Common myeloid progenitor, CD34-positive (primary cell): ENCODE measurements at regions of chr20 and their contacts with region 1.

Region 1: DNA sequence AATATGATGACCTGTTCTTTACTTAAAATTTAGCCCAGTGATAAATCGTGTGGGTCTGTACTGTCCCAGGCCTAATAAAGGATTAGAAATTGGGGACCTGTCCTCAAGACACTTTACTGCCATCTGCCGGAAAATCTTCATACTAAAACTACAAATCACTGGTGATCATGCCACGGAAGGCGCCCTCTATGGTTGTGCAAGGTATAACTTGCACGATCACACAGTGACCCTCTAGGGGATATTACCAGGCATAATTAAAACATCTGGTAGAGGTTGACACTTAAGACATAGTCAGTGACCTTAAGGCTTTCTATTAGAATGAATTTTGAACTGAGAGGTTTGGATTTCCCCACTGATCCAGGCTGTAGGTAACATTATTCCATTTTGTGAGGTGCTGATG is 172.6 kb downstream of the BMP2 start:
- DNase-seq: peak; percentile 67 to 80 (median 69)
- H3K4me3 ChIP-seq: no peak overlapping the region
- H3K27ac ChIP-seq: no peak overlapping the region
- H3K4me1 ChIP-seq: no peaks in the 10 kb centered on the region
- H3K27me3 ChIP-seq: no peaks in the 10 kb centered on the region

Region 2: DNA sequence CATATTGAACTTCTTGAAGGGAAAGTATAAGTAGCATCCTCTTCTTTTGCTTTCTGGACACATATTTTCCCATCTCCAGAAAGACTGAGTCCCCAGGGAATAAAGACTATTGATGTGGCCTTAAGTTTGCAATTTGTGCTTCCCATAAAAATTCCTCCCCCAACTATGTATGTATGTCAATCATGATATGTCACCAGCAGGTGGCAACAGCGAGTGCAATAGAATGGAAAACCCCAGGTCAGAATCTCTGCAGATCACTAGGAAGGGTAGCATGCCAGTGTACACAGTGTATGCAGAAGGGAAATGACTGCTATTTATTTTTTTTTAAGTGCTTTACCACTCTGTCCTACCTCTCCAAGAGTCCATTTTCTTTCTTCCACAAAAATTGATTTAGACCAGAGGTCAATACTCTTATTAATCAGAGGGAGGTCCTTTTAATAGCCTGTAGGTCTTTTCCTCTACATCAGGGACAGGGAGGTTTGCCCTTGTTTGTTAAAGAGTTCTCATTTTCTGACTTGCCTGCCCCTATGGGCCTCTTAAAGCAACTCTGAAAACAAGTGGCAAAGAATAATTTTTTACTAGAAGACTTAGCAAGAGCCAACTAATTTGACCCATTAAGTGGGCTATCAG is 111.1 kb before region 1 on chr20:
- CTCF ChIA-PET with region 1: interaction called, 16 read pairs
- POLR2A ChIA-PET with region 1: no interaction called
- DNase-seq: peak; percentile 63 to 80 (median 72)
- H3K4me3 ChIP-seq: no peak overlapping the region
- H3K27ac ChIP-seq: no peak overlapping the region
- H3K4me1 ChIP-seq: no peaks in the 10 kb centered on the region
- H3K27me3 ChIP-seq: peaks cover 0 to 2% (median 0%) of the 10 kb centered on the region in 5 experiments

Region 3: DNA sequence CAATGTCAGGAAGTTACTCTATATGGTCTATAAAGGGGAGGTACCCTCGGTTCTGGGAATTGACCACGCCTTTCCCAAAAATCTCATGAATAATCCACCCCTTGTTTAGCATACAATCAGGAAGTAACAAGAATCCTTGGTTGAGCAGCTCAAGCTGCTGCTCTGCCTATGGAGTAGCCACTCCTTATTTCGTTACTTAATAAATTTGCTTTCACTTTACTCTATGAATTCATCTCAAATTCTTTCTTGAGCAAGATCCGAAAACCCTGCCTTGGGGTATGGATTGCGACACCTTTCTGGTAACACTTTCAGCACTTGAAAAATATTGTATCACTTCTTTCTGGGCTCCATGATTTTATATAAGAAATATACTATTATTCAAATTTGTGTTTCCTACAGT is 70.5 kb after region 1 on chr20:
- CTCF ChIA-PET with region 1: no interaction called
- POLR2A ChIA-PET with region 1: no interaction called
- DNase-seq: no peak
- H3K4me3 ChIP-seq: no peak overlapping the region
- H3K27ac ChIP-seq: no peak overlapping the region
- H3K4me1 ChIP-seq: no peaks in the 10 kb centered on the region
- H3K27me3 ChIP-seq: no peaks in the 10 kb centered on the region